ENCODE measurements at regions of chr7 and their contacts with region 1.

Region 1: GRCh38 chr7:74684921-74685320 is 27.4 kb downstream of the GTF2I start:
- DNase-seq: no peak
- H3K4me3 ChIP-seq: no peak overlapping the region
- H3K27ac ChIP-seq: no peak overlapping the region
- H3K4me1 ChIP-seq: no peaks in the 10 kb centered on the region
- H3K27me3 ChIP-seq: no peaks in the 10 kb centered on the region
- CTCF ChIP-seq: no peak

Region 2: DNA sequence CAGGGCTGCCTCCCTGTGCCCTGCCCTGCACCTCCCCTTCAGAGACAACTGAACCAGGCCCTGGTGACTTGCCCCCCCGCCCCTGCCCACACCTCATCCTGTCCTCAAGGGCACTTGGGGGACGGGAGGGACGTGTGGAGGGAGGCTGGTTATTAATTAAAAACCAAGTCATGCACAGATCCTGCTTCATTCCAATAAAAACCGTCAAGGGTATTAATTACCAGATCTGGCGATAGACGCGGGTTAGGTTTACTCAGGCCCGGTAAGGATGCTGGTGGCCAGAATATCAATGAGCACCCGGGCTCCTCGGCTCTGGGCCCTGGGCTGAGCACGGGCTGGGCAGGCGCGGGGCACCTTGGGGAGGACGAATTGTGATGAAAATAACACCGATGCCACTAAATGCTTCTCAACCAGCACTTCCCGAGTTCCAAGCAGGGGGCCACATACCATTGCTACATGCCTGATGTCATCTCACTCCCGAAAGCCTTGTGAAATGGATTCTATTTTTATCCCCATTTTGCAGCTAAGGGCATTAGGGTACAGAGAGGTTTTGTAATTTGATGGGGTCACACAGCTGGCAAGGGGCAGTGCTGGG is 255.7 kb before region 1 on chr7:
- CTCF ChIA-PET with region 1: no interaction called
- POLR2A ChIA-PET with region 1: no interaction called
- intact Hi-C with region 1: loop called (anchors 10 kb)
- DNase-seq: no peak
- H3K4me3 ChIP-seq: no peak overlapping the region
- H3K27ac ChIP-seq: no peak overlapping the region
- H3K4me1 ChIP-seq: no peaks in the 10 kb centered on the region
- H3K27me3 ChIP-seq: no peaks in the 10 kb centered on the region
- CTCF ChIP-seq: no peak

Measured in PC-9 (cell line).